ENCODE measurements at regions of chr15 and their contacts with region 1.

Region 1: DNA sequence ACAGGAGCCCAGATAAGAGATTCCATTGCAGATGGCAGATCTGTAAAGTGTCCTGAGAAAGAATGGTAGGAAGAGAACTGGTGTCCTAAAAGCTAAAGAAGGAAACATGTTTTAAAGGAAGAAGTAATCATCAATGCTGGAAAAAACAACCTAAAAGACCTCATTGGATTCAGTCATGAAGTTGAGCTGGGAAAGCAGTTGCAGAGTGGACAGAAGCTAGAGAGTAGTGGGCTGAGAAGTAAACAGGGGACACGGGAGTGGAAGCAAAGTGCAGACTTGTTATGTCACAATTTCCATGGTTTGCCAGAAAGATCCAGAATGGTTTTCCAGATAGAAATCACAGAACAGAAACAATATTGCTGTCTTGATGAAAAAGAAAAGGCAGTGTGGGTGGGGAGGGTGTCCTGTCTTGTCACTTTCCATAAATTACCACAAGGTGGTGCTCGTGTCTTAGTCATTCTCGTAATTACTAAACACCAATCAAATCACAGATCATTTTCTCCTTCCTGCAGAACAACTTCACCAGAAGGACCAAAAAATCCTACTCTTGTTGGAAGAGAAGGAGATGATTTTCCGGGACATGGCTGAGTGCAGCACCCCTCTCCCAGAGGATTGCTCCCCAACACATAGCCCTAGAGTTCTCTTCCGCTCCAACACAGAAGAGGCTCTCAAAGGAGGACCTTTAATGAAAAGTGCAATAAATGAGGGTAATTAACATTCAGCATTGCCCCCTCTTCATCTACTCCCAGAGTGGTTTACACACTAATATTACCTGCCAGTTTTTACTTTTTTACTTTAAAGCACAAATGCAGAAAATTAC is 64.5 kb downstream of the KLHL25 start:
- DNase-seq: no peak
- H3K4me3 ChIP-seq: no peak overlapping the region
- H3K27ac ChIP-seq: peak overlapping the region in 3 of 4 donors; percentile 45 to 84 (median 73)
- H3K4me1 ChIP-seq: peaks cover 0 to 26% (median 24%) of the 10 kb centered on the region in 4 donors
- H3K27me3 ChIP-seq: no peaks in the 10 kb centered on the region
- CTCF ChIP-seq: peak; percentile 62 to 83 (median 72)
- EP300 ChIP-seq: no peak
- POLR2A ChIP-seq: no peak

Region 2: GRCh38 chr15:85624291-85624801 is 105.9 kb before region 1 on chr15:
- intact Hi-C with region 1: loop called (anchors 5 kb)
- DNase-seq: no peak
- H3K4me3 ChIP-seq: peak overlapping the region in 2 of 4 donors; percentile 6 to 51
- H3K27ac ChIP-seq: peak overlapping the region; percentile 26 to 89 (median 84)
- H3K4me1 ChIP-seq: peaks cover 0 to 84% (median 65%) of the 10 kb centered on the region in 4 donors
- H3K27me3 ChIP-seq: no peaks in the 10 kb centered on the region
- CTCF ChIP-seq: no peak
- EP300 ChIP-seq: no peak
- POLR2A ChIP-seq: no peak

Region 3: DNA sequence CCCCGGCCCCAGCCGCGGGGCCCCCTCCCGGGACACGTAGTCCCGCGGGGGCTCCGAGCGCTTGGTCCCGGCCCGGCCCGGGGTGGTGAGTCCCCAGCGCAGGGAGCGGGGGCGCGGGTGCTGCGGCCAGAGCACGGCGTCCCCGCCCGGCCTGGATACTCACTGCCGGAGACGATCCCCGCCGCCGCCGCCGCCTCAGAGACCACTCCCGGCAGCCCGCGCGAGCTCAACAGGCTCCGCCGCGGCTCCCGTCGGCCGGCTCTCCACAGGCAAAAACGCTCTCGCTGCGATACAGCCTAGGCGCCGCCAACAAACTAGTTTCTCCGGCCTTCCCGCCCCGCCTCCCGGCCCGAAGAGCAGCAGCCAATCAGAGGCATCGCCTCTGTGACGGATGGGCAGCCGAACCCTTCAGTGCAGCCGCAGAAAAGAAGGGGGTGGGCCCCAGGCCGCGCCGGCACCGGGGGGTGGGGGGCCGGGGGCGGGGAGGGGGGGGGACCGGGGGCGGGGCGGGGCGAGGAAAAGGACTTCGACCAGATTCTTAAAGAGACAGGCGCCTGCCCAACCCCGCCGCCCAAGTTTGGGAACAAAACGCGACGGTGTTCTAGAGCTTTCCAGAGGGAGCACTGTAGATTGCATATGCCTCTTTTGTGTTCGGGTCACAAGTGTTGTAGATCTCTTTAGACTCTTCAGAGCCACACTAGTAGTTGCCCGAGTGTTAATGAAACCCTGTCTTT is 64.6 kb after region 1 on chr15 and contains the start of gene KLHL25:
- intact Hi-C with region 1: loop called (anchors 5 kb)
- DNase-seq: peak; percentile 97
- H3K4me3 ChIP-seq: peak within 1 kb of the TSS; percentile 69 to 94 (median 78)
- H3K27ac ChIP-seq: peak within 1 kb of the TSS; percentile 84 to 95 (median 89)
- H3K4me1 ChIP-seq: peaks cover 0 to 24% (median 18%) of the 10 kb centered on the region in 4 donors
- H3K27me3 ChIP-seq: no peaks in the 10 kb centered on the region
- CTCF ChIP-seq: no peak
- EP300 ChIP-seq: no peak
- POLR2A ChIP-seq: peak; percentile 21 to 69
- total RNA-seq, gene KLHL25: 4.1 to 9.0 (median 6.9) TPM

Region 4: DNA sequence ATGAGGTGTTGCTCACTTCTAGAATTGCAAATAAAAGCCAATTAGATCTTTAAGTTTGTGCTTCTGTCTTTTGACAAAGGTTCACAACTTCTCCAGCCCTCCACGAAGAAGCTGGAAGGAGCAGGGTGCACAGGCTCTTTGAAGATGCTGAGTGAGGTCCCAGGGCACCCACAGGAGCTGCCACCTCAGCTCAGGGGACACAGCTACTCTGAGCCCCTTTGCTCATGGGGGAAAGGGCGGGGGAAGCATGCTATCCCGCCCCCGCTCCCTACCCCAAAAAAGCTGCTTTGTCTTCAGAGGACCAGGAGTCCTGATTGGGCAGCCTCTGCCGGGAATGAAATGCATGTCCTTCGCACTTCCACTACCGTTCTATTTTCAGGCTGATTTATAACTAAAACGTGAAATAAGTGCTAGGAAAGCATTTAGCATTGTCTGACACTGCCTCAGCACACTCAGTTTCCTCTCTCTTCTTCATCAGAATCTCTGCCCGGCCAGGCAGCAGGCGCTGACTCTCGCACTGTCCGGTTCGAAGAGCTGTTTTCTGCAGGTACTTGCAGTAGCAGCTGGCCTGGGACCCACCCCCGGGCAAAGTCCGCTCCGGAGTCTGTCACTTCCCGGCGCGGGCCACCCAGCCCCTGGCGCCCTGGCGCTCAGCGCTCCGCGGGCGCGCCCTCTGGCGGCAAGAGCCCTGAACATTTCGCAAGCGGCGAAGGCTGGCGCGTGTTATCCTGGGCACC is 110.0 kb after region 1 on chr15:
- intact Hi-C with region 1: loop called (anchors 1 kb)
- DNase-seq: peak; percentile 89
- H3K4me3 ChIP-seq: peak overlapping the region; percentile 1 to 32 (median 31)
- H3K27ac ChIP-seq: peak overlapping the region in 1 of 4 donors; percentile 18
- H3K4me1 ChIP-seq: peaks cover 0 to 9% (median 4%) of the 10 kb centered on the region in 4 donors
- H3K27me3 ChIP-seq: peaks cover 0 to 12% (median 0%) of the 10 kb centered on the region in 3 donors
- CTCF ChIP-seq: peak; percentile 67 to 91 (median 88)
- EP300 ChIP-seq: no peak
- POLR2A ChIP-seq: no peak

Measured in sigmoid colon (tissue), 7 donors.